ENCODE measurements at regions of chr5 and their contacts with region 1.

Region 1: GRCh38 chr5:36739751-36740221 is 133.4 kb downstream of the SLC1A3 start:
- DNase-seq: peak; percentile 86

Region 2: DNA sequence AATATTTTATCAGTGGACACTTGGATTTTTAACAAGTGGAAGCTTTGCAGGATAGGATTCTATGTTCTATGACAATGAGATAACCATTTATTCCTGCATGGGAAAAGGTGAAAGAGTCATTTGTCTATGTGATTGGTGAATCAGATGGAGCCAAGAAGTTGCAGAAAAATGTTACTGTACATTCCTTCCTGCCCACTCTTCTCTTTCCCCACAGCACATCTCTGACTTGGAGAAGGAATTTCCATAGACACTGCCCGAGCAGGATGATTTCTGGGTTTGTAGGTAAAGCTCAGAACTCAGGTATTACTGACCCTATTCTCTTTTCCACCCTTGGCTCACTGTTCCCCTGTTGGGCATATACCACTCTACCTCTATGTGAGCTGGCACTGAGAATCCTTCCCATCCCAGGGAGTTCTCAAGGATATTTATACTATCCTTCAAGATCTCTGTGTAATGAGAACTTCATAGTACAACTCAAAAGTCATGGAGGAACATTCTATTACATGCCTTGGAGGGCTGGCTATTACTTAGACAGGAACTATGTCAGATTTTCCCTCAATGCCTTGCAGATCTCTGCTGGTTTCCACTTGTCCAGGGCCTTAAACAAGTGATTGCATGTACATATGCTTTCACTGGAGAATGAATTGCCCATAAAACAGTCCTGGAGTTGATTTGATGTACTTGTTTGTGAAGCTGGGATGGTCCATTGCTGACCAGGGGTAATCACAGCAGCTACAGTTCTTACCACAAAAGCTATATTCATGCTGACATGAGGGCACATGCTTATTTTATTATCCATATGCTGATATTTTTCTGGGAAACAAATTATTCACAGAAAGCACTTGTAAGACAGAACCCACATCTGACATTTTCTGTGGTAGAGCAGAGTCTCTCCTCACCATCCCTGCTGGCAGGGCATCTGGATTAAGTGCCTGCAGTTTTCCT is 109.3 kb before region 1 on chr5:
- intact Hi-C with region 1: no loop called
- DNase-seq: no peak

Region 3: GRCh38 chr5:36875790-36876388 is 136.1 kb after region 1 on chr5:
- intact Hi-C with region 1: loop called in 1 of 2 experiments (anchors 10 kb)
- DNase-seq: peak; percentile 93

Region 4: GRCh38 chr5:37799865-37800421 is 1060.2 kb after region 1 on chr5:
- intact Hi-C with region 1: no loop called
- DNase-seq: no peak